ENCODE measurements at regions of chr17 and their contacts with region 1.

Region 1: DNA sequence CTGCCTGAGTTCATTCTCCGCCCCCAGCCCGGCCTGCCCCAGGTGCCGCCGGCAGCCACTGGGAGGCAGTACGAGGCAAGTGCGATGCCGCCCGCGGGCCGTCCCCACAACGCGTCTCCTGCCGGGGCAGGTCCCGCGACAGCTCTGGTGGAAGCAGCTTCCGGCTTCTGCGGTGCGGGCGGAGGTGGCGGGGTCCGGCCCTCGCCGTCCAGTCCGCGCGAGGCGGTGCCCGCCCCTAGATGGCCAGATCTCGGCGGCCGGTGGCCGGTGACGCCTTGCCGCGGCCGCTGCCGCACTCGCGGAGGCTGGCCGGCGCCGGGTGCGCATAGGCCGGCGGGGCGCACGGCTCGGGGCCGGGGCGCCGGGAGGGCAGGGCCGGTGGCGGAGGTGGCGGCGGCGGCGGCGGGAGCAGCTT is 1.8 kb downstream of the GJD3 start:
- DNase-seq: no peak
- H3K4me3 ChIP-seq: peak overlapping the region; percentile 56 to 84 (median 62)
- H3K27ac ChIP-seq: peak overlapping the region; percentile 25 to 75 (median 68)
- H3K4me1 ChIP-seq: peaks cover 19 to 54% (median 31%) of the 10 kb centered on the region in 3 donors
- H3K27me3 ChIP-seq: no peaks in the 10 kb centered on the region
- CTCF ChIP-seq: peak; percentile 51 to 87 (median 66)
- POLR2A ChIP-seq: no peak

Region 2: GRCh38 chr17:40191237-40192208 is 171.2 kb before region 1 on chr17:
- intact Hi-C with region 1: loop called (anchors 10 kb)
- DNase-seq: peak; percentile 28
- H3K4me3 ChIP-seq: peak overlapping the region; percentile 29 to 80 (median 50)
- H3K27ac ChIP-seq: peak overlapping the region; percentile 49 to 72 (median 60)
- H3K4me1 ChIP-seq: peaks cover 12 to 70% (median 19%) of the 10 kb centered on the region in 3 donors
- H3K27me3 ChIP-seq: no peaks in the 10 kb centered on the region
- CTCF ChIP-seq: peak; percentile 53 to 73 (median 60)
- POLR2A ChIP-seq: no peak

Region 3: GRCh38 chr17:40287494-40288369 is 75.0 kb before region 1 on chr17 and contains the start of gene CDC6:
- intact Hi-C with region 1: no loop called
- DNase-seq: peak; percentile 92
- H3K4me3 ChIP-seq: peak within 1 kb of the TSS; percentile 47 to 69 (median 60)
- H3K27ac ChIP-seq: peak within 1 kb of the TSS in 3 of 4 donors; percentile 64 to 84 (median 67)
- H3K4me1 ChIP-seq: peaks cover 19 to 48% (median 26%) of the 10 kb centered on the region in 3 donors
- H3K27me3 ChIP-seq: no peaks in the 10 kb centered on the region
- CTCF ChIP-seq: peak in 1 of 6 experiments; percentile 51
- POLR2A ChIP-seq: peak in 2 of 4 donors; percentile 46 to 78
- total RNA-seq, gene CDC6: 2.9 to 17.8 (median 9.8) TPM

Region 4: GRCh38 chr17:40417609-40418427 is 55.1 kb after region 1 on chr17 and contains the start of gene TOP2A:
- intact Hi-C with region 1: loop called (anchors 10 kb)
- DNase-seq: peak; percentile 93
- H3K4me3 ChIP-seq: peak within 1 kb of the TSS; percentile 63 to 79 (median 74)
- H3K27ac ChIP-seq: peak within 1 kb of the TSS; percentile 66 to 80 (median 72)
- H3K4me1 ChIP-seq: peaks cover 0 to 44% (median 17%) of the 10 kb centered on the region in 3 donors
- H3K27me3 ChIP-seq: peaks cover 0 to 5% (median 0%) of the 10 kb centered on the region in 4 donors
- CTCF ChIP-seq: peak in 1 of 6 experiments; percentile 13
- POLR2A ChIP-seq: peak in 1 of 4 donors; percentile 63
- total RNA-seq, gene TOP2A: 24.9 to 87.1 (median 50.6) TPM

Region 5: DNA sequence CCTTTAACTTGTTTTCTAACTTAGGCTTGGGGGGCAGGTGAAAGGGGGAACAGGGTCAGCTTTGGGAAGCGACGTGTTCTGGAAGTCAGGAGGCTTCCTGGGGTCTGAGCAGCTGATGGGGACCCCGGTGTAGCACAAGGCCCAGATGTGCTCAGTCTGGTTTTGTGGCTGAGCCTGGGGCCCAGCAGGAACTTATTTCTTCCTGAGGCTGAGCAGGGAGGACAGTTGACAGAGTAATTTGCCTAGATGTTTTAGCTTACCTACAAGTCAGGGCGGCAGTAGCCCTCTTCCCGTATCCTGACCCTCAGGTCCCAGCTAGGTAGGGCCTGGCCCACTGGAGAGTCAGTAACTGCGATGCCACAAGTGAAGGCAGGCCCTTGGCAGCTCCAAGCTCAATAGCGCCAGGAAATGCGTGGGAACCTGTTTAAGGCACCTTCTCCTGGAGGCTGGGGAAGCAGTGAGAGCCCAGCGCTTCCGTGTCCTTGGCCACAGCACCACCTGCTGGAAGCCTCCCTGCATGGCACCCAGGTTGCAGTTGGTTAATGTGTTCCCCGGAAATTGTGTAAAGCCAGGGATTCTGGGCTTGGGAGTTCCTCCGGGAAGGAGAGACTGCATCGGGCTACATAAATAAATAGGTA is 197.4 kb after region 1 on chr17:
- intact Hi-C with region 1: loop called (anchors 10 kb)
- DNase-seq: no peak
- H3K4me3 ChIP-seq: peak overlapping the region in 3 of 4 donors; percentile 15 to 48 (median 27)
- H3K27ac ChIP-seq: peak overlapping the region; percentile 65 to 84 (median 84)
- H3K4me1 ChIP-seq: peaks cover 25 to 95% (median 38%) of the 10 kb centered on the region in 3 donors
- H3K27me3 ChIP-seq: no peaks in the 10 kb centered on the region
- CTCF ChIP-seq: peak; percentile 96 to 100 (median 98)
- POLR2A ChIP-seq: no peak